ENCODE measurements at regions of chr16 and their contacts with region 1.

Region 1: DNA sequence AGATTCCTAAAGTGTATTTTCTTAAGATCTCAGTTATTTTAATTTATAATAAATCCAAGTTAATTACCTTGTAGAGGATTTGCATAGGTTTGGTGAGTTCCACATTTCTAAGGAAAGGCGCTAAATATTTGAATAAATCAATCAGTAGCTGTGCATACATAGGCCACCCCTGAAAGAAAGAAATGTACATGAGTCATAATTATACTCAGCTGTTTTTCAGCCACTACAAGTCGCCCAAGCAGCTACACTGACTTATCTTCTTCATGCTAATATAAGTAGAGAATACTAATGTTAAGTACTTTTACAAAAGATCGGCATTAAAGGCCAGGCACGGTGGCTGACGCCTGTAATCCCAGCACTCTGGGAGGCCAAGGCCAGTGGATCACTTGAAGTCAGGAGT is 14.9 kb downstream of the SETD6 start:
- DNase-seq: no peak
- H3K4me3 ChIP-seq: no peak overlapping the region
- H3K27ac ChIP-seq: no peak overlapping the region
- H3K4me1 ChIP-seq: no peaks in the 10 kb centered on the region
- H3K27me3 ChIP-seq: no peaks in the 10 kb centered on the region
- CTCF ChIP-seq: no peak
- POLR2A ChIP-seq: no peak

Region 2: GRCh38 chr16:58366247-58367031 is 163.7 kb before region 1 on chr16:
- intact Hi-C with region 1: no loop called
- DNase-seq: no peak
- H3K4me3 ChIP-seq: no peak overlapping the region
- H3K27ac ChIP-seq: no peak overlapping the region
- H3K4me1 ChIP-seq: no peaks in the 10 kb centered on the region
- H3K27me3 ChIP-seq: no peaks in the 10 kb centered on the region
- CTCF ChIP-seq: no peak
- POLR2A ChIP-seq: no peak

Region 3: GRCh38 chr16:58589326-58589905 is 59.2 kb after region 1 on chr16:
- intact Hi-C with region 1: loop called (anchors 2 kb)
- DNase-seq: no peak
- H3K4me3 ChIP-seq: no peak overlapping the region
- H3K27ac ChIP-seq: no peak overlapping the region
- H3K4me1 ChIP-seq: no peaks in the 10 kb centered on the region
- H3K27me3 ChIP-seq: no peaks in the 10 kb centered on the region
- CTCF ChIP-seq: no peak
- POLR2A ChIP-seq: no peak

Measured in vagina (tissue), 2 donors.